ENCODE measurements at regions of chr3 and their contacts with region 1.

Region 1: DNA sequence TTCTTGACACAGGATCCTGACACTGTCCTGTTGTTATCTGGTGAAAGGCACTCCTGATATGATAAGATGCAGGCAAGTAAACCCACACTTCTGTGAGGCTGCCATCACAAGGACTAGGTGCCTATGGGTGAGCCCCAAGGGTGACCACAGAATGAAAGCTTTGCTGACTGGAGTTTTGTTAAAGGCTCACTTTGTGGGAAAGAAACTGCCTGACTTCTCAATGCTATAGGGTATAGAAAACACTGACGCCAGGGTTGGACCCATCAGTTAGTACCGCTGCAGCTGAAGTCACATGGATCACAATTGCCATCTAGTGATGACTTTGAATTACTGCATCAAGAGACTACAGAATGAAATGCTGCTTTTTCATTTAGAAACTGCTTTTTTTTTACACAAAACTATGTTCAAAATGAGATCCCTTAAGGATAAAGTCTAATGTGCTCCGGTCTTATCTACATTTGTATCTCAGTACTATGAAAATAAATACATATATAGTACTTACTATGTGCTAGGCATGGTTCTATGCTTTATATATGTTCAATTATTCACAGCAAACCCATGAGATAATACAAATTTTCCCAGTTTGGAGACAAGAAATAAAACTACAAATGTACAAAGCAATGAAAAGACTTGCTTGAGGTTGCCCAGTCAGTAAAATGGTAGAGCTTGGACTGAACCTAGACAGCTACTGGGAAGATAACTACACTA is 64.2 kb upstream of the CMSS1 start:
- DNase-seq: peak; percentile 39 to 50
- H3K4me3 ChIP-seq: no peak overlapping the region
- H3K27ac ChIP-seq: no peak overlapping the region
- H3K4me1 ChIP-seq: no peaks in the 10 kb centered on the region
- H3K27me3 ChIP-seq: peaks cover 9% of the 10 kb centered on the region; the same call in 1 of the 2 replicates
- CTCF ChIP-seq: peak; percentile 96

Region 2: DNA sequence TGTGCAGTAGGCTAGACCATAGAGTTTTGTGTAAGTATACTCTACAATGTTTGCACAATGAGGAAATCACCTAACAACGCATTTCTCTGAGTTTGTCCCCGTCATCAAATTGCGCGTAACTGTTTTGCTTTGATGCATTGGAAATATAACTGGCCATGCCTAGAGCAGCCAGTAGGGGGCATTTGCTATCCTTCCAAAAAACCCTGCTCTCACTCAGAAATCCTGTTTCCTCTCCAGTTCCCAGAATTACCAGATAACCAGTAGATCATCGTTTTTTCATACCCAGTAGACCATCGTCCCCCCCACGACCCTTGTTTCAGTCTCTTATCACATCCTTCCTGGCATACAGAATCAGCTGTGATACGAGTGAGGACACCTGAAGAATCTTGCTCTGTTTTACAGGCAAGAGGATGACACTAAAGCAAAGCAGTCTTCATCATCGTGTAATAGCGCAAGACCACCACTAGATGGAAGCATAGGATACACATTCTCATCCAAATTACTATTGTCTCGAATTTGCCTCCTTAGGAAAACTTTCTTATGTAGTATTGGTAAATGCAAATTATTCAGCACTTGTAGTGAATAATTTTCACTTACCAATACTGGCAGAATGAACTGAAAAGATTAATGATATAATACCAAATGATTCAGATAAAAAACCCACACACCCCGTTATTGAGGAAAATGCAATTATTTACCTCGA is 1713.9 kb before region 1 on chr3:
- CTCF ChIA-PET with region 1: interaction called, 4 read pairs
- POLR2A ChIA-PET with region 1: no interaction called
- intact Hi-C with region 1: loop called (anchors 10 kb)
- DNase-seq: peak; percentile 74 to 81
- H3K4me3 ChIP-seq: peak overlapping the region; percentile 50; the same call in 1 of the 2 replicates
- H3K27ac ChIP-seq: no peak overlapping the region
- H3K4me1 ChIP-seq: peaks cover 9% of the 10 kb centered on the region; the same call in 1 of the 2 replicates
- H3K27me3 ChIP-seq: no peaks in the 10 kb centered on the region
- CTCF ChIP-seq: peak; percentile 100

Region 3: DNA sequence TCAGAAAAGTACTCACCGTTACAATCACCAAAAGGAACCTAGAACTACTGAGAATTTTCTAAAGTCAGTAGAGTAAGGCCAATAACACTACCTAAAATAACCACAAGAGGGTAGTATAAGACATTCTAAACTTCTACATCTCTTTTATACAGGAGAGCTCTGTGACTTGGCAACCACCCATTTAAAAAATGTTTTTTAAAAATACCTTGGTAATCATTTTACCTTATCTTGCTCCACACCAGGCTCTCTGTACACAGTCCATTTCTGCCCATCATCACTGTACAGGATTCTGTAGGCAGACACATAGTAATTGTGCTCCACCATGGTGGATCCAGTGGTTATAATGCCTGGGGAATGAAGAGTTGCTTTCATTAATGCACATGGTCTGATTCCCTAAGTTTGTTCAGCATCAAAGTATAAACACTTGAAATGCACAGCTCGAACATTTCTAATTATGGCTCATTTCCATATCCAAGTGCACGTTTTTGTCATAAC is 935.8 kb before region 1 on chr3:
- CTCF ChIA-PET with region 1: no interaction called
- POLR2A ChIA-PET with region 1: no interaction called
- intact Hi-C with region 1: loop called (anchors 2 kb)
- DNase-seq: peak in 1 of 2 experiments; percentile 64
- H3K4me3 ChIP-seq: no peak overlapping the region
- H3K27ac ChIP-seq: peak overlapping the region; percentile 2; the same call in 1 of the 2 replicates
- H3K4me1 ChIP-seq: peaks cover 24% of the 10 kb centered on the region
- H3K27me3 ChIP-seq: no peaks in the 10 kb centered on the region
- CTCF ChIP-seq: peak; percentile 95

Region 4: GRCh38 chr3:99023590-99024192 is 729.7 kb before region 1 on chr3:
- CTCF ChIA-PET with region 1: interaction called, 4 read pairs
- POLR2A ChIA-PET with region 1: no interaction called
- intact Hi-C with region 1: loop called (anchors 1 kb)
- DNase-seq: no peak
- H3K4me3 ChIP-seq: no peak overlapping the region
- H3K27ac ChIP-seq: no peak overlapping the region
- H3K4me1 ChIP-seq: no peaks in the 10 kb centered on the region
- H3K27me3 ChIP-seq: no peaks in the 10 kb centered on the region
- CTCF ChIP-seq: peak; percentile 96

Region 5: DNA sequence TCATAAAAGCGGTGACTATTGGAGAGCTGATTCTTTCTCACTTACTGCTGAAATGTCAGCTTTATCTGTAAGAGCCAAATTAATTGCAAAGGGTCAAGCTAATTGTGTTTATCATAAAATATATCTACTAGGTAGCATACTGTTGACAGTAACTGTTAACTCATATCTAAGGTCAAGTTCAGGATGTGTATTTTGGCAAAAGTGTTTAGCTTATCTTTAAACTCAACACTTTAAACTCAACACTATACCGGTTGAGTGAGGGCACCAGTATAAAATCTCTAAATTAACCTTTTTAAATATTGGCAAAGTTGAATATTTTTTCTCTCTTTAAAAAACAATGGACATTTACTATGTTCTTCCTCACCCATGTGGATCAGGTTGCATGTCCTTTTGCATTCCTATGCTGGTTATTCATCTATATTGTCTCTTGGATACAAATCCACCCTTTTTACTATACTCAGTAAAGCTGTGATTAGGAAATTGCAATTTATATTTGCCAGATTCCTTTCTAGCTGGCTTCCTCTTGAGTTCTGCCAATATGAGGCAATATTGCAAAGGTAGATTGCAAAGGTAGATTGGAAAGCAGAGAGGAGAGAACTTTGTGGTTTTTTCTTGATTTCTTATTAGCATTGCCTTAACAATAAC is 507.3 kb before region 1 on chr3:
- CTCF ChIA-PET with region 1: no interaction called
- POLR2A ChIA-PET with region 1: no interaction called
- intact Hi-C with region 1: loop called (anchors 10 kb)
- DNase-seq: peak in 1 of 2 experiments; percentile 60
- H3K4me3 ChIP-seq: no peak overlapping the region
- H3K27ac ChIP-seq: no peak overlapping the region
- H3K4me1 ChIP-seq: peaks cover 12% of the 10 kb centered on the region
- H3K27me3 ChIP-seq: no peaks in the 10 kb centered on the region
- CTCF ChIP-seq: no peak

Region 6: DNA sequence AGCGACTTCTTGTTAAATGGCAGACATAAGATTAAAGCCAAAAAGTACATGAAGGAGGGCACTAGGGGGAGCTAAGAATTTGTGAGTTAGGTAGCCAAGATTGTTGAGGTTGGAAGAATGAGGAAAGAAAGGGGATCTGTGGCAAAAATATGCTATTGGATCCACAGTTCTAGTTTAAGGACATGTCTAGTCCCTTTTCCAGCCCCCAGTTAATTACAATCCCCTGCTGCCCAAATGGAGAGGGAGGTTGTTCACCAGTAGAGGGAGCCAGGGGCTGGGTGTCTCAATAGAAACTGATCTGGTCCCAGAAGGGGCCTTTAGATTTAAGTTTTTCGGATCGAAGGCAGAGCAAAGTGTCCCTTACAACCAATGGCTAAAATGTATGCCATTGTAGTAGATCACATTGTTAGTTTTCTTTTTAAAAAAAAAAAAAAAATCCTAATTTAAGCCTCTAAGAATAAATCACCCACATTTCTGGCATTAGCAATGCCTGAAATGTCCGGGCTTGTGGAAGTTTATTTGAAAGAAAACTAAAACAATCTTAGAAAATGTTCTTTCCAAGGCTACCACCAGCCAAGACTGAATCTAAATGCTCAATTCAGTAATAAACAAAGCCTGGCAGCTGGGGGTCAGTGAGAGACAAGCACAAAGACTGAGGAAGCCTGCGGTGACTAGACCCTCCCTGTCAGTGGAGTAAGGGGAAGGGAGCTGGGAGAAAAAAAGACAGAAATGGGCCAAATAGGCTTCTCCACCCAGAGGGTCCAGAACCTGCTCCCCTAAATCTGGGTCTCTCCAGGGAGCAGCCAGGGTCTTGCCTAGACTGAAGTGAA is 107.9 kb before region 1 on chr3:
- CTCF ChIA-PET with region 1: interaction called, 3 read pairs
- POLR2A ChIA-PET with region 1: no interaction called
- intact Hi-C with region 1: loop called (anchors 2 kb)
- DNase-seq: no peak
- H3K4me3 ChIP-seq: no peak overlapping the region
- H3K27ac ChIP-seq: no peak overlapping the region
- H3K4me1 ChIP-seq: no peaks in the 10 kb centered on the region
- H3K27me3 ChIP-seq: no peaks in the 10 kb centered on the region
- CTCF ChIP-seq: peak; percentile 82